Heart left ventricle (tissue), 16 donors: ENCODE measurements at regions of chrX and their contacts with region 1.

Region 1: GRCh38 chrX:150772150-150772970 is 79.2 kb downstream of the MTMR1 start:
- DNase-seq: peak; percentile 66 to 89 (median 73)
- ATAC-seq: peak; percentile 70 to 88 (median 83)
- H3K4me3 ChIP-seq: no peak overlapping the region
- H3K27ac ChIP-seq: no peak overlapping the region
- H3K4me1 ChIP-seq: peaks cover 0 to 7% (median 2%) of the 10 kb centered on the region in 12 donors
- H3K27me3 ChIP-seq: no peaks in the 10 kb centered on the region
- CTCF ChIP-seq: peak; percentile 55 to 82 (median 72)
- POLR2A ChIP-seq: no peak

Region 2: GRCh38 chrX:150898343-150899190 is 126.2 kb after region 1 on chrX and contains the start of gene CD99L2:
- intact Hi-C with region 1: loop called in 3 of 10 experiments (anchors 5 to 10 kb)
- DNase-seq: peak; percentile 88 to 95 (median 91)
- ATAC-seq: peak; percentile 94 to 98 (median 98)
- H3K4me3 ChIP-seq: peak within 1 kb of the TSS; percentile 46 to 91 (median 66)
- H3K27ac ChIP-seq: peak within 1 kb of the TSS; percentile 32 to 84 (median 80)
- H3K4me1 ChIP-seq: peaks cover 0 to 12% (median 0%) of the 10 kb centered on the region in 12 donors
- H3K27me3 ChIP-seq: no peaks in the 10 kb centered on the region
- CTCF ChIP-seq: no peak
- POLR2A ChIP-seq: peak in 1 of 2 donors; percentile 45
- total RNA-seq, gene CD99L2: 70.8 to 115 (median 94.6) TPM

Region 3: DNA sequence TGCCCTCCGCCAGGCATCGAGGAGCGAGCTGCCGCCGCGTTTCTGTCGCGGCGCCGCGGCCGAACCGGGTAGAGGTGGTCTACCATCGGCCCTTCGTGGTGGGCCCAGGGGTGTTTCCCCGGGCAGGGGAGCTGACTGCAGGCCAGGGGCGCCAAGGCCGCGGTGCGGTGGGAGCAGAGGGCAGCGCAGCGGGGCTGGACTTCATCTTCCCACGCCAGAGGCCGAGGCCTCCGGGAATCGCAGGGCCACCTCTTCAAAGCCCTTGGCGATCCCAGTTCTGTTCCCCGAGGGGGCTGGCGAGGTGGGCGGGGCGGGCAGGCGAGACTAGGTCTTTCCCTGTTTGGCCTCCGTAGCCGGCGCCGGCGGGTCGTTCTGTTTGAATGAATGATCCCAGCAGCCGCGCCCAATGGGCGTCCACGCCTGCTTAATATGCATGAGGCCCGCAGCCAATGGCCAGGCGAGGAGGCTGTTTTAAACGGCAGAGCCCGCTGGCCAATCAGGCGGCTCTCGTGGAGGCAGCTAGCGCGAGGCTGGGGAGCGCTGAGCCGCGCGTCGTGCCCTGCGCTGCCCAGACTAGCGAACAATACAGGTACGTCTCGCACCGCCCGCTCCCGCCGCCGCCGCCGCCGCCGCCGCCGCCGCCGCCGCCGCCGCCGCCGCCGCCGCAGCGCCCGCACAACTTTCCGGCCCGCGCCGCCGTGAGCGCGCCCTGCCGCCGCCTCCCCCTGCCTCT is 210.6 kb after region 1 on chrX and contains the start of gene HMGB3:
- intact Hi-C with region 1: loop called in 2 of 10 experiments (anchors 5 to 10 kb)
- DNase-seq: peak; percentile 73 to 90 (median 89)
- ATAC-seq: peak; percentile 88 to 99 (median 98)
- H3K4me3 ChIP-seq: peak within 1 kb of the TSS; percentile 8 to 65 (median 52)
- H3K27ac ChIP-seq: peak within 1 kb of the TSS in 1 of 12 donors; percentile 55
- H3K4me1 ChIP-seq: peaks cover 0 to 4% (median 0%) of the 10 kb centered on the region in 12 donors
- H3K27me3 ChIP-seq: no peaks in the 10 kb centered on the region
- CTCF ChIP-seq: no peak
- POLR2A ChIP-seq: peak in 1 of 2 donors; percentile 49
- total RNA-seq, gene HMGB3: 2.6 to 27.8 (median 10.4) TPM

Region 4: DNA sequence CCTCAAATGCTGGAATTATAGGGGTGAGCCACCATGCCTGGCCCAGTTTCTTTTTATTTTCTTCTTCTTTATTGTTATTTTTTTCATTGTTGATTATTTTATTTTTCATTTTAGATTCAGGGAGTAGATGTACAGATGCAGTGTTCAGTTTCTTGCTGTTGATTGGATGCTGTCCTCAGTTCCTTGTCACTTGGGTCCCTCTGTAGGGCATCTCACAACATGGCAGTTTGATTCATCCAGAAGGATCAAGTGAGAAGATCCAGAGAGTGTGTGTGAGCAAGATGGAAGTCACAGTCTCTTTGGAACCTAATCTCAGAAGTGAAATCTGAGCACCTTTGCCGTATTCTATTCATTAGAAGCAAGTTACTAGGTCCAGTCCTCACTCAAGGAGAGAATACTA is 231.7 kb after region 1 on chrX:
- intact Hi-C with region 1: loop called in 4 of 10 experiments (anchors 5 to 10 kb)
- DNase-seq: no peak
- ATAC-seq: no peak
- H3K4me3 ChIP-seq: no peak overlapping the region
- H3K27ac ChIP-seq: no peak overlapping the region
- H3K4me1 ChIP-seq: no peaks in the 10 kb centered on the region
- H3K27me3 ChIP-seq: peaks cover 0 to 8% (median 0%) of the 10 kb centered on the region in 9 donors
- CTCF ChIP-seq: peak in 2 of 12 donors; percentile 5 to 23
- POLR2A ChIP-seq: no peak

Region 5: GRCh38 chrX:151082076-151082948 is 310.0 kb after region 1 on chrX:
- intact Hi-C with region 1: loop called (anchors 1 to 2 kb)
- DNase-seq: peak; percentile 38 to 76 (median 53)
- ATAC-seq: peak; percentile 73 to 92 (median 88)
- H3K4me3 ChIP-seq: no peak overlapping the region
- H3K27ac ChIP-seq: no peak overlapping the region
- H3K4me1 ChIP-seq: peaks cover 0 to 8% (median 0%) of the 10 kb centered on the region in 12 donors
- H3K27me3 ChIP-seq: peaks cover 0 to 45% (median 0%) of the 10 kb centered on the region in 9 donors
- CTCF ChIP-seq: peak; percentile 77 to 93 (median 85)
- POLR2A ChIP-seq: no peak